A549 (cell line): ENCODE measurements at regions of chr17 and their contacts with region 1.

Region 1: GRCh38 chr17:44587339-44587738 is 30.1 kb downstream of the FZD2 start:
- DNase-seq: peak; percentile 96 to 97
- ATAC-seq: peak; percentile 100
- H3K4me3 ChIP-seq: no peak overlapping the region
- H3K27ac ChIP-seq: peak overlapping the region; percentile 94 to 98
- H3K4me1 ChIP-seq: peaks cover 50% of the 10 kb centered on the region
- CTCF ChIP-seq: no peak
- EP300 ChIP-seq: peak; percentile 49 to 77; a peak in 2 of 5 replicates
- POLR2A ChIP-seq: no peak
- RAD21 ChIP-seq: peak; percentile 46 to 48; a peak in 3 of 5 replicates

Region 2: GRCh38 chr17:44543213-44543904 is 44.0 kb before region 1 on chr17:
- CTCF ChIA-PET with region 1: interaction called, 14 read pairs
- POLR2A ChIA-PET with region 1: interaction called, 20 read pairs
- DNase-seq: peak; percentile 94 to 98
- ATAC-seq: peak; percentile 80 to 91
- H3K4me3 ChIP-seq: no peak overlapping the region
- H3K27ac ChIP-seq: peak overlapping the region; percentile 93 to 94
- H3K4me1 ChIP-seq: peaks cover 66% of the 10 kb centered on the region
- CTCF ChIP-seq: no peak
- EP300 ChIP-seq: peak; percentile 51 to 81; a peak in 4 of 5 replicates
- POLR2A ChIP-seq: no peak
- RAD21 ChIP-seq: peak; percentile 46 to 47; a peak in 4 of 5 replicates

Region 3: DNA sequence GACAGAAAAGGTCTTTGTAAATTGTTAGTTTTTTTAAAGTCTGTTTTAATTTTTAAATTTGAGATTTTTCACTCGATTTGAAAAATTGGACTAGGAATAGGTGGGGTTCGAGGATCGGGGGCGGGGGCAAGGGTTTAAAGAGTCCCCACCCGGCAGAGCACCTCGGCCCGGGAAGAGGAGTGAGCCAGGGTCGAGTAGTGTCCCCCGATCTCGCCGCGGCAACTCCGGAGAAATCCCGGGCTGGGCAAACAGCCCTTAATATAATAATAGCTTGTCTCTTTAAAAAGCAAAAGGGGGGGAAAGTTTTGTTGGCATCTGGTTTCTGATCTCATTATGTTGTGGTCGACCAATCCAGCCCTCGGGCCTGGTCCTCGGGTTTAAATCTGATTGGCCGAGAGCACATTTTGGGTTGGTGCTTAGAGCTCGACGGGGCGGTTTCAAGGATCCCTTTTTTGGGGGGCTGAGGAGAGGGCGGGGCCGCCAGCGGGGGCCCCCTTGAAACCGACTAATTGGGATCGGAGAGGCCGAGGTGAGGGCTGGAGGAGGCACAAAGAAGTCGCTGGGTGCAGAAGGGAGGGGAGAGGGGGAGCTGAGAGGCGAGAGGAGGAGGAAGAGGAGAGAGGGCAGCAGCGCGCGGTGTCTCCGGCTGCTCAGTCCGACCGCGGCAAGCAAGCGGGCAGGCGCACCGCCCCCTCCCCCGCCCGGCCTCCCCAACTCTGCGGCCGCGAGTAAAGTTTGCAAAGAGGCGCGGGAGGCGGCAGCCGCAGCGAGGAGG is 30.3 kb before region 1 on chr17 and contains the start of gene FZD2:
- CTCF ChIA-PET with region 1: interaction called, 9 read pairs
- POLR2A ChIA-PET with region 1: interaction called, 20 read pairs
- DNase-seq: peak; percentile 98 to 99
- ATAC-seq: peak; percentile 89 to 95
- H3K4me3 ChIP-seq: peak within 1 kb of the TSS; percentile 56
- H3K27ac ChIP-seq: peak within 1 kb of the TSS; percentile 94 to 95
- H3K4me1 ChIP-seq: peaks cover 65% of the 10 kb centered on the region
- CTCF ChIP-seq: no peak
- EP300 ChIP-seq: no peak
- POLR2A ChIP-seq: peak; percentile 68
- RAD21 ChIP-seq: peak in 1 of 2 experiments; percentile 9; a peak in 3 of 5 replicates
- polyA plus RNA-seq, gene FZD2: 25.8 and 26.9 TPM in 2 replicates

Region 4: DNA sequence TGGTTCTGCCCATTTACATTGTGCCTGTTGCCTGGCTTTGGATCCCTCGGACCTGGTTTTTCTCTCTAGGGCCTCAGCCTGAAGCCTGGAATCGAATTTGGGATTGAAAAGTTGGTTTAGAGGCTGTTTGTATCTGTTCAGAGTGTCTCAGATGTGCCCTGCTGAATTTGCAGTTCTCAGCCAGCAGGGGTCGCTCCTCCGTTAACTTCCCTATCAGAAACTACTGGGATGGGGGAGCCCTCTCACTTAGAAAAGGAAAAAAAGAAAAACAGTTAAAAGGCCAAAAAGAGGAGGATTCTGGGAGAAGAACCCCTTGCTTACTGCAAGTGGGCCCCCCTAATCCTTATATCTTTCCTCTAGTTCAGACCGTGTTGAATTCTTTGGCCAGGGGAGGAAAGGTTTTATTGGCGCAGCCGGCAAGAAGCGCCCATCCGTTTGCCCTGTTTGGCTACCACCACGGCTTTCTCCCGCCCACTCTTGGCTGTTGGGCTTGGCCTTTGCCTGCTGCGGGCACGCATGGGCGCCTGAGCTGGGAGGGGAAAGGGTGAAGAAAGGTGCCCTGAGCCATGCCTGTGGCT is 21.4 kb before region 1 on chr17:
- CTCF ChIA-PET with region 1: interaction called, 25 read pairs
- POLR2A ChIA-PET with region 1: interaction called, 3 read pairs
- DNase-seq: no peak
- ATAC-seq: no peak
- H3K4me3 ChIP-seq: no peak overlapping the region
- H3K27ac ChIP-seq: peak overlapping the region in 1 of 2 experiments; percentile 29; a peak in 1 of 6 replicates
- H3K4me1 ChIP-seq: peaks cover 14% of the 10 kb centered on the region
- CTCF ChIP-seq: peak; percentile 43
- EP300 ChIP-seq: no peak
- POLR2A ChIP-seq: no peak
- RAD21 ChIP-seq: peak in 1 of 2 experiments; percentile 55; a peak in 3 of 5 replicates

Region 5: GRCh38 chr17:44599298-44600175 is 12.2 kb after region 1 on chr17:
- CTCF ChIA-PET with region 1: interaction called, 16 read pairs
- POLR2A ChIA-PET with region 1: interaction called, 10 read pairs
- DNase-seq: peak; percentile 87 to 93
- ATAC-seq: peak; percentile 90 to 95
- H3K4me3 ChIP-seq: no peak overlapping the region
- H3K27ac ChIP-seq: peak overlapping the region; percentile 86 to 88
- H3K4me1 ChIP-seq: peaks cover 50% of the 10 kb centered on the region
- CTCF ChIP-seq: no peak
- EP300 ChIP-seq: no peak
- POLR2A ChIP-seq: no peak
- RAD21 ChIP-seq: peak; percentile 14 to 32; a peak in 4 of 5 replicates

Region 6: DNA sequence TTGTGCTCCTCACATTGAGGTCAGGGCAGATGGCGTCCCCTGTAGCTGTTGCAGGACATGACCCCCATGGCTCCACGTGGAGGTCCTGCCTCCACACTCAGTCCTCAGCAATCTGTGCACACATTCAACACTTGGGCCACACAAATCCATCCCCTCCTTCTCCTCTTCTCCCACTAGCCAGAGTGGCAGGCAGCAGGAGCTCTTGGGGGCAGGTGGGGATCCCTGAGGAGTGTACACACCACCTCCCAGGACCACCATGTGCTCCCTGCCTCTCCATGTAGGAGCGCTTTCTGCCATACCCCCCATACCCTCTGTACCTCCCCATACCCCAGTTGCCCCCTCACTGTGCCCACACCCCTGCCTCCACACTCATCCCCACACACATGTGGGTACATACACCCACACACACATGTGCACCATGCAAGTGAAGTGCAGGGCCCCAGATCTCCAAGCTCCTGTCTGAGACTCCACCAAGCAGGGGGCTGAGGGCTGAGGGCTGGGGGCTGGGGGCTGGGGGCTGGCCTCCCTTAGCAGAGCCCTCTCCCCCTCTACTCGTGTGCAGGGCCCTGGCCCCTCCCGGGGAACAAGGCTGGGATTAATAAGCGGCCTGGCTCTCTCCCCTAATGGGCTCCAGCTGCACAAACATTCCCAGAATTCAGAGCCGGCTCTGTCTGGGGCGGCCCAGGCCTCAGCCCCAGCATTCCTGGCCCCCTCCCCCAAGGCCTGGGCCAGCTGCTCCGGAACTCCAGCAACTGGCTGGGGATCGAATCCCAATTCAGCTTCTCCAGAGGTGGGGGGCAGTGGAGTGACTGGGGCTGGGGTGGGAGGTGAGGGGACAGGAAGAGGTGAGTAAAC is 20.7 kb after region 1 on chr17:
- CTCF ChIA-PET with region 1: interaction called, 11 read pairs
- POLR2A ChIA-PET with region 1: interaction called, 7 read pairs
- DNase-seq: no peak
- ATAC-seq: no peak; a peak in 2 of 6 replicates
- H3K4me3 ChIP-seq: no peak overlapping the region
- H3K27ac ChIP-seq: peak overlapping the region; percentile 44 to 81; a peak in 4 of 6 replicates
- H3K4me1 ChIP-seq: peaks cover 11% of the 10 kb centered on the region
- CTCF ChIP-seq: no peak
- EP300 ChIP-seq: no peak
- POLR2A ChIP-seq: no peak
- RAD21 ChIP-seq: no peak